ENCODE measurements at regions of chr11 and their contacts with region 1.

Region 1: GRCh38 chr11:64778508-64779346 is at the start of gene SF1:
- DNase-seq: peak; percentile 95 to 100 (median 100)
- ATAC-seq: peak; percentile 81 to 84 (median 82)
- H3K4me3 ChIP-seq: peak within 1 kb of the TSS; percentile 66 to 93
- H3K4me3 Mint-ChIP-seq: peak within 1 kb of the TSS; percentile 85 to 93 (median 91)
- H3K27ac ChIP-seq: peak within 1 kb of the TSS; percentile 99
- H3K27ac Mint-ChIP-seq: peak within 1 kb of the TSS; percentile 98 to 100
- H3K4me1 ChIP-seq: peaks cover 39 to 45% of the 10 kb centered on the region in 2 experiments
- H3K4me1 Mint-ChIP-seq: peaks cover 61 to 63% (median 62%) of the 10 kb centered on the region in 3 donors
- H3K27me3 ChIP-seq: no peaks in the 10 kb centered on the region
- H3K27me3 Mint-ChIP-seq: no peaks in the 10 kb centered on the region
- total RNA-seq, gene SF1: 670 to 1,510 (median 732) TPM

Region 2: DNA sequence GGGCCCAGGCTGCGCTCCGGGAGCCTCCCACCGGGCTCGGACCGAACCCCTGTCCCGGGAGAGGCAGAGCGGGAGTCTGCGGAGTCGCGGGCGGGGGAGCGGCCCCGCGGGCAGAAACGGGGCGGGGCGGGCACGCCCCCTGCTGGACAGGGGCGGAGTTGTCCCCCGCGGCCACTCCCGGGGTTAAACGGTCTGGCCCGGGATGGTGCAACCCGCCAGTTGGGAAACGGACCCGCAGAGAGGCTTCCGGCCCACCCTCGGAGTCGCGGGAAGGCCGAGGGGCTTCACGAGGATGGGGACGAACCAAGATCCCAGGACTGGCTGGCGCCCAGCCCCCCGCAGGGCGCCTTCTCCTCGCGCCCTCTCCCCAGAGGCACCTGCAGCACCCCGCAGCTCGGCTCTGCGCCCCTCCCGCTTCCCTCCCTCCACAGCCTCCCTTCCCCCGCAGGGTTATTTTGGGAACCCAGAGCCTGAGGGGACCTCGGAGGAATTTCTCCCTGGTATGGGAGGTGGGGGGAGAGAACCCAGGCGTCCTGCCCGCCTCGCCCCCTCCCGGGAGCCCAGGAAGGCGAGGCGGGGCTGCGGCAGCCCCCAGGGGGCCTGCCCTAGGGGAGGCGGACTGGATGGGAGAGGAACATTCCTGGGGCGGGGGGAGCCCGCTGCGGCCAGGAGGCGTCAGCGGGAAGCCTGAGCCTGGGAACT is 35.7 kb before region 1 on chr11:
- CTCF ChIA-PET with region 1: interaction called, 3 to 14 read pairs
- POLR2A ChIA-PET with region 1: interaction called, 4 to 20 read pairs
- DNase-seq: peak; percentile 34 to 84 (median 66)
- ATAC-seq: peak; percentile 9 to 14 (median 12)
- H3K4me3 ChIP-seq: peak overlapping the region; percentile 93 to 97
- H3K4me3 Mint-ChIP-seq: peak overlapping the region; percentile 95 to 97 (median 96)
- H3K27ac ChIP-seq: peak overlapping the region; percentile 92
- H3K27ac Mint-ChIP-seq: no peak overlapping the region
- H3K4me1 ChIP-seq: peaks cover 8 to 63% of the 10 kb centered on the region in 2 experiments
- H3K4me1 Mint-ChIP-seq: peaks cover 42 to 45% (median 44%) of the 10 kb centered on the region in 3 donors
- H3K27me3 ChIP-seq: no peaks in the 10 kb centered on the region
- H3K27me3 Mint-ChIP-seq: no peaks in the 10 kb centered on the region

Region 3: GRCh38 chr11:64762674-64763525 is 15.8 kb before region 1 on chr11:
- CTCF ChIA-PET with region 1: interaction called in 1 of 2 experiments, 8 read pairs
- POLR2A ChIA-PET with region 1: interaction called, 7 to 17 read pairs
- DNase-seq: peak in 5 of 35 experiments; percentile 26 to 55 (median 28)
- ATAC-seq: peak in 3 of 4 experiments; percentile 4 to 14 (median 10)
- H3K4me3 ChIP-seq: peak overlapping the region in 1 of 2 donors; percentile 30
- H3K4me3 Mint-ChIP-seq: peak overlapping the region; percentile 25 to 86 (median 70)
- H3K27ac ChIP-seq: peak overlapping the region; percentile 74
- H3K27ac Mint-ChIP-seq: peak overlapping the region; percentile 88 to 97
- H3K4me1 ChIP-seq: peaks cover 65 to 100% of the 10 kb centered on the region in 2 experiments
- H3K4me1 Mint-ChIP-seq: peaks cover 83 to 87% (median 86%) of the 10 kb centered on the region in 3 donors
- H3K27me3 ChIP-seq: no peaks in the 10 kb centered on the region
- H3K27me3 Mint-ChIP-seq: no peaks in the 10 kb centered on the region

Region 4: DNA sequence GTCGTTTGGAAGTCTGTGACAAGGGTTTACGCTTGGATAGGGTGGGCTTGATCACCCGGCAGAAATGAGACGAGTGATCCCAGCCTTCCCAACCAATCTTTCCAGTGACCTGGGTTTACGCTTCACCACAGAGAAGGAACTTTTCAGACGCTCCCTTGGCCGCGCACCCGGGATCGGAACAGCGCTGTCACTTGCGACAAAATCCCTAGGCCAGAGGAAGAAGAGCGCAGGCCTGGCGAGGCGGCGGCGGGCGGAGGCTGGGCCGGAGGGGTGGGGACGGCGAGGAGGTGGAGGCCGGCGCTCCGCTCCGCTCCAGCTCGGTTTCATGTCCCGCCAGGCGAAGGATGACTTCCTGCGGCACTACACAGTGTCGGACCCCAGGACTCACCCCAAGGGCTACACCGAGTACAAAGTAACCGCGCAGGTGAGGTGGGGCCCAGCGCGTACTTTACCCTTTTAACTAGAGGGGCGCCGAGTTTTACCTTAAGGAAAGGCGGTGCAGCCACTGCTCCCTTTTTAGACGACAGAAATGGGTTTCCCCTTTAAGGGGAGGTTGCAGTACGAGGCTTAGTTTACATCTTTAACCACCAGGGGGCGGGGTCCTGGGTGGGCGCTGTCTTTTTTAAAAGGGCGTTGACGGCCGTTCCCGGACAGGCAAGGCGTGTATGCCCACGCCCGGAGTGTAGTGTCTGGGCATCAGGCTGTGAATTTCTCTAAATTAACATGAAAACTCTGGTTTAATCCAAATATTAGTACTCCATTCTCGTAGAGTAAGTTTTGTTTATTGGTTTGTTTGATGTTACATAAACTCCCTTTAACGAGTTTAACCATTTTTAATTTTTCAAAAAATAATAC is 248.7 kb after region 1 on chr11 and contains the start of gene SNX15:
- CTCF ChIA-PET with region 1: no interaction called
- POLR2A ChIA-PET with region 1: interaction called in 1 of 2 experiments, 12 read pairs
- DNase-seq: peak; percentile 72 to 95 (median 85)
- ATAC-seq: peak; percentile 91 to 94 (median 91)
- H3K4me3 ChIP-seq: peak within 1 kb of the TSS; percentile 27 to 53
- H3K4me3 Mint-ChIP-seq: peak within 1 kb of the TSS; percentile 68 to 86 (median 83)
- H3K27ac ChIP-seq: peak within 1 kb of the TSS; percentile 70
- H3K27ac Mint-ChIP-seq: peak within 1 kb of the TSS; percentile 90 to 91
- H3K4me1 ChIP-seq: peaks cover 5 to 24% of the 10 kb centered on the region in 2 experiments
- H3K4me1 Mint-ChIP-seq: peaks cover 19 to 24% (median 21%) of the 10 kb centered on the region in 3 donors
- H3K27me3 ChIP-seq: no peaks in the 10 kb centered on the region
- H3K27me3 Mint-ChIP-seq: no peaks in the 10 kb centered on the region
- total RNA-seq, gene SNX15: 19.6 to 28.6 (median 25.4) TPM

Region 5: DNA sequence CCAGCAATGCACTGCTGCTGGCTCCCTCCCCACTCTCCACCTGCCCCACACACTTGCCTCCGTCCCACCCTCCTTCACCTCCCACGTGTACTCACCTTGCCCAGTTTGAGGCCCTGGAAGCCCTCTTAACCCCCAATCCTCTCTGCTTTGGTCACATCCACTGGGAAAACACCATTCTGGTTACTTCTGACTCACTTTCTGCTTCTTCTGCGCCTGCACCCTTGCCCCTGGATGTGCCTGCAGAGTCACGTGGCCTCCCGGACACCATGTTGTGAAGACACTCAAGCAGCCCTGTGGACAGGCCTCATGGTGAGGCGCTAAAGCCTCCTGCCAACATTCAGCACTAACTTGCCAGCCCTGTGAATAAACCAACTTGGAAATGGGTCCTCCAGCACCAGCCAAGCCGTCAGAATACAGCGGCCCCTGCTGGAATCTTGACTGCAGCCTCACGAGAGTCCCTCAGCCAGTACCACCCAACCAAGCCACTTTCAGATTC is 282.2 kb after region 1 on chr11:
- CTCF ChIA-PET with region 1: no interaction called
- POLR2A ChIA-PET with region 1: no interaction called
- DNase-seq: peak in 1 of 35 experiments; percentile 5
- ATAC-seq: peak in 1 of 4 experiments; percentile 51
- H3K4me3 ChIP-seq: no peak overlapping the region
- H3K4me3 Mint-ChIP-seq: no peak overlapping the region
- H3K27ac ChIP-seq: no peak overlapping the region
- H3K27ac Mint-ChIP-seq: no peak overlapping the region
- H3K4me1 ChIP-seq: no peaks in the 10 kb centered on the region
- H3K4me1 Mint-ChIP-seq: peaks cover 0 to 4% (median 2%) of the 10 kb centered on the region in 3 donors
- H3K27me3 ChIP-seq: peaks cover 0 to 12% of the 10 kb centered on the region in 2 experiments
- H3K27me3 Mint-ChIP-seq: no peaks in the 10 kb centered on the region